ENCODE measurements at regions of chr4 and their contacts with region 1.

Region 1: DNA sequence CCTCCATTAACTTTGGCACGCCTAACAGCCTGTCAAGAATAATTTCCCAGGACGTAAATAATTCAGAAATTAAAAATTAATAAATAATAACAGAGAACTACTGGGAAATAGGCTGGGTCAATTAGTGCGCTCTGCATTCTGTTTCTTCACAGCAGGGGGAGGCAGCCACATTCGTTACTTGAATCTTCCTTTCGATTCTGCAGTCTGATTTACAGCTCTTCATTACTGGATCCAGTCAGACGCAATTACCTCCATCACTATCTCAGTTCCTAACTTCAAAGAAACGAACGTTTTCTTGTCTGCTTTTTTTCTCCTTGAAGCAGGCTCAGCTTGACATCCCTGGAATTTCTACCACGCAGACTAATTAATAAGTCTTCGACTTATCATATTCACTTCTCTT is 9.0 kb upstream of the RPL34 start:
- DNase-seq: no peak
- ATAC-seq: no peak
- H3K4me3 ChIP-seq: peak overlapping the region in 10 of 12 donors; percentile 5 to 45 (median 26)
- H3K27ac ChIP-seq: no peak overlapping the region
- H3K4me1 ChIP-seq: peaks cover 0 to 4% (median 0%) of the 10 kb centered on the region in 12 donors
- H3K27me3 ChIP-seq: no peaks in the 10 kb centered on the region
- CTCF ChIP-seq: peak in 3 of 12 donors; percentile 23 to 35 (median 25)
- POLR2A ChIP-seq: no peak

Region 2: GRCh38 chr4:108570993-108571569 is 40.3 kb before region 1 on chr4:
- intact Hi-C with region 1: no loop called
- DNase-seq: no peak
- ATAC-seq: no peak
- H3K4me3 ChIP-seq: no peak overlapping the region
- H3K27ac ChIP-seq: no peak overlapping the region
- H3K4me1 ChIP-seq: peaks cover 0 to 4% (median 0%) of the 10 kb centered on the region in 12 donors
- H3K27me3 ChIP-seq: no peaks in the 10 kb centered on the region
- CTCF ChIP-seq: no peak
- POLR2A ChIP-seq: no peak

Region 3: DNA sequence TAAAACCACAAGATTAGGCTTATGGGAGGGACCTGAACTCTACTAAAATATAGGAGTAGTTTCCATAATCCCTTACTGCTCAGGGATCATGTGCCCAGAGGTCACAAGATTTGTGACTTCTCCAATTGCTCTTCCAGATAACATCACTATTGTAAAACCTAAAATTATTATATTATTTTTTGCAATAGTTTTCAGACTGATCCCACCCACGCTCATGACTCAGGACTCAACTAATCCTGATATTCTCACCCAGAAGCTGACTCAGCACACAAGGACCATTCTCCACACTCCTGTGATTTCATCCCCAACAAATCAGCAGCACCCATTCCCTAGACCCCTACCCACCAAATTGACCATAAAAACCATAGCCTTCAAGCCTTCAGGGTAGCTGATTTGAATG is 15.0 kb before region 1 on chr4:
- intact Hi-C with region 1: loop called in 1 of 10 experiments (anchors 1 kb)
- DNase-seq: no peak
- ATAC-seq: no peak
- H3K4me3 ChIP-seq: no peak overlapping the region
- H3K27ac ChIP-seq: no peak overlapping the region
- H3K4me1 ChIP-seq: peaks cover 0 to 6% (median 0%) of the 10 kb centered on the region in 12 donors
- H3K27me3 ChIP-seq: no peaks in the 10 kb centered on the region
- CTCF ChIP-seq: no peak
- POLR2A ChIP-seq: no peak